ENCODE measurements at regions of chr5 and their contacts with region 1.

Region 1: GRCh38 chr5:91280362-91281269 is 102.5 kb downstream of the ARRDC3 start:
- DNase-seq: peak; percentile 89 to 94
- ATAC-seq: peak; percentile 85 to 95 (median 92)
- H3K4me3 ChIP-seq: peak overlapping the region; percentile 57
- H3K4me3 Mint-ChIP-seq: peak overlapping the region; percentile 98
- H3K27ac ChIP-seq: peak overlapping the region; percentile 52
- H3K27ac Mint-ChIP-seq: peak overlapping the region; percentile 95
- H3K4me1 ChIP-seq: peaks cover 16% of the 10 kb centered on the region
- H3K4me1 Mint-ChIP-seq: peaks cover 20 to 25% of the 10 kb centered on the region in 2 donors
- H3K27me3 ChIP-seq: peaks cover 2% of the 10 kb centered on the region
- H3K27me3 Mint-ChIP-seq: peaks cover 0 to 7% of the 10 kb centered on the region in 2 donors
- CTCF ChIP-seq: no peak

Region 2: GRCh38 chr5:91162534-91163381 is 117.9 kb before region 1 on chr5:
- intact Hi-C with region 1: loop called (anchors 10 kb)
- DNase-seq: peak; percentile 62 to 67
- ATAC-seq: peak; percentile 90 to 98 (median 95)
- H3K4me3 ChIP-seq: no peak overlapping the region
- H3K4me3 Mint-ChIP-seq: peak overlapping the region; percentile 33
- H3K27ac ChIP-seq: peak overlapping the region; percentile 67
- H3K27ac Mint-ChIP-seq: peak overlapping the region; percentile 79 to 91
- H3K4me1 ChIP-seq: peaks cover 20% of the 10 kb centered on the region
- H3K4me1 Mint-ChIP-seq: peaks cover 28% of the 10 kb centered on the region in 2 donors
- H3K27me3 ChIP-seq: no peaks in the 10 kb centered on the region
- H3K27me3 Mint-ChIP-seq: no peaks in the 10 kb centered on the region
- CTCF ChIP-seq: no peak

Region 3: GRCh38 chr5:91266184-91266705 is 14.4 kb before region 1 on chr5:
- intact Hi-C with region 1: loop called (anchors 2 kb)
- DNase-seq: peak in 1 of 2 donors; percentile 15
- ATAC-seq: peak in 2 of 3 donors; percentile 65 to 87
- H3K4me3 ChIP-seq: no peak overlapping the region
- H3K4me3 Mint-ChIP-seq: no peak overlapping the region
- H3K27ac ChIP-seq: no peak overlapping the region
- H3K27ac Mint-ChIP-seq: peak overlapping the region in 1 of 2 donors; percentile 60
- H3K4me1 ChIP-seq: peaks cover 8% of the 10 kb centered on the region
- H3K4me1 Mint-ChIP-seq: peaks cover 19 to 24% of the 10 kb centered on the region in 2 donors
- H3K27me3 ChIP-seq: no peaks in the 10 kb centered on the region
- H3K27me3 Mint-ChIP-seq: no peaks in the 10 kb centered on the region
- CTCF ChIP-seq: no peak

Region 4: DNA sequence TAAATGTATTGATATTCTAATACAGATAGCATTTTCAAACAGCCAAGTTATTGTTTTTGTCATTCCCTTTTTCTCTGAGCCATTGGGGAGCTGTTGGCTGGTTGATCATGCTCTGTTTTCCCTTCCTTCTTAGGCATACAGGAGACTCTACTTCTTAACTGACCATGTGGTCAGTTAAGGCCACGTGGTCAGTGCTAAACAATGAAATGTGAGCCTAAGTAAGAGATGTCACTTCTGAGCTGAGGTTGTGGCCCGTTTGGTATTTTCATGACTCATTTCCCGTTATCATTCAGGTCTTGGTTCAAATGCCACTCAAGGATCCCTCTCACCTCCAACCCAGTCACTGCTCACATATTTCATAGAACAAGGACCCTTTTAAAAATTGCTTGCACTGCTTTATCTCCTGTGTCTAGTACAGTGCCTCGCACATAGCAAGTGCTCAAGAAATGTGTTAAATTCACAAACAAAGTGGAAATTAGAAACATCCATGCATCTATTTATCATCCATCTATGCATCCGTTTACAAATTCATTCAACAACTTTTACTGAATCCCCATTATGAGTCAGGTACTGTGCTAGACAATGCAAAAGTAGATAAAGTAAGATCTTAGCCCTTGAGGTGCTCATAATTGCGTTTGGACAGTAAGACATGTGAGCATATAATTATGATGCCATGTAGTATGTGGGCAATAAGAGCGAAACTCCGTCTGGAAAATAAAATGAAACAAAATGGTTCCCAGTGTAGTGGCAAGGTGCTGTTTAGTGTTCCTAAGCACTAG is 51.8 kb after region 1 on chr5:
- intact Hi-C with region 1: no loop called
- DNase-seq: peak in 1 of 2 donors; percentile 15
- ATAC-seq: peak; percentile 71 to 94 (median 83)
- H3K4me3 ChIP-seq: no peak overlapping the region
- H3K4me3 Mint-ChIP-seq: peak overlapping the region; percentile 1
- H3K27ac ChIP-seq: no peak overlapping the region
- H3K27ac Mint-ChIP-seq: peak overlapping the region; percentile 41 to 59
- H3K4me1 ChIP-seq: peaks cover 4% of the 10 kb centered on the region
- H3K4me1 Mint-ChIP-seq: peaks cover 17 to 22% of the 10 kb centered on the region in 2 donors
- H3K27me3 ChIP-seq: no peaks in the 10 kb centered on the region
- H3K27me3 Mint-ChIP-seq: no peaks in the 10 kb centered on the region
- CTCF ChIP-seq: no peak

Measured in natural killer cell (primary cell).